ENCODE measurements at regions of chr7 and their contacts with region 1.

Region 1: DNA sequence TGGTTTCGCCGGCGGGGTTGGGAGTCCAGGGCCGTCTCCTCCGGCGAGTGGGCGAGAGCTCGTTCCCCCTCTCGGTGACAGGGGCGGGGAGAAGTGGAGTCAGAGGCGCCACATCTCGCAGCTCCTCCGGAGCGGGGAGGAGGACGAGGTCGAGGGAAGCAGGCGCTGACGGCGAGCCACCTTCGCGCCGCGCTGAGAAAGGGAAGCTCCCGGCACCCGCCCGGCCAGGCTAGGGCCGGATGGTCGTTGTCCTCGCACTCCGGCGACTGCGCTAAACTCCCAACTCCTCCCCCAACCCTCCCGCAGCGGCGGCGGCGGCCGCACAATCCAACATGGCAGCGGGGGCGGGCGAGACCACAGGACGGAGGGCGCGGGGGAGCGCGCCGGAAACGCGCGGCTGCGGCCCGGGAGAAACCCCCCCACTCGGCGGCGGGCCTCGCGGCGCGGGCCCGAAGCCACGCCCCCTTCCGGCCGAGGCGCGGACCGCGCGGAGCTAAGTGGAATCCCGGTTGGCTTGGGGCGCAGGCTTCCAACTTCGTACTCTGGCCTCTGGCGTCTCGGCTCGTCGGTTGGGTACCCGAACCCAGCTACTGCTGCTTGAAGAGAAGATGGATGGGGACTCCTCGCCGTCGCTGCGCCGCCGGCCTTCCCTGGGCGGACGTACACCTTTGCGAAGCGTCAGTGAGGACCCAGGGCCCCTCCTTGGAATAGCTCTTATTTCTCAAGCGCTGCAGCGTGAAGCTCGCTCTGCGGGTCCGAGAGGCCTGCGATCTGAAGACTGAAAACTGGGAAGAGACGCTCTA is at the start of gene WASL:
- DNase-seq: peak; percentile 96 to 99 (median 96)
- ATAC-seq: peak; percentile 75
- H3K4me3 ChIP-seq: peak within 1 kb of the TSS; percentile 77
- H3K27ac ChIP-seq: peak within 1 kb of the TSS; percentile 94
- H3K4me1 ChIP-seq: peaks cover 16 to 20% of the 10 kb centered on the region in 2 experiments; a peak in 4 of 5 replicates
- H3K27me3 ChIP-seq: no peaks in the 10 kb centered on the region
- CTCF ChIP-seq: no peak; a peak in 1 of 6 replicates
- EP300 ChIP-seq: peak; percentile 69; the same call in 1 of the 2 replicates
- POLR2A ChIP-seq: peak; percentile 98
- RAD21 ChIP-seq: peak in 1 of 2 experiments; percentile 25; a peak in 1 of 4 replicates
- polyA plus RNA-seq, gene WASL: 3.2 to 4.4 TPM

Region 2: GRCh38 chr7:123401295-123401694 is 347.6 kb before region 1 on chr7:
- CTCF ChIA-PET with region 1: no interaction called
- POLR2A ChIA-PET with region 1: no interaction called
- in situ Hi-C with region 1: no loop called
- intact Hi-C with region 1: no loop called
- DNase-seq: peak in 1 of 4 experiments; percentile 9
- ATAC-seq: no peak
- H3K4me3 ChIP-seq: no peak overlapping the region
- H3K27ac ChIP-seq: no peak overlapping the region
- H3K4me1 ChIP-seq: no peaks in the 10 kb centered on the region
- H3K27me3 ChIP-seq: no peaks in the 10 kb centered on the region
- CTCF ChIP-seq: no peak
- EP300 ChIP-seq: no peak
- POLR2A ChIP-seq: no peak
- RAD21 ChIP-seq: no peak

Region 3: DNA sequence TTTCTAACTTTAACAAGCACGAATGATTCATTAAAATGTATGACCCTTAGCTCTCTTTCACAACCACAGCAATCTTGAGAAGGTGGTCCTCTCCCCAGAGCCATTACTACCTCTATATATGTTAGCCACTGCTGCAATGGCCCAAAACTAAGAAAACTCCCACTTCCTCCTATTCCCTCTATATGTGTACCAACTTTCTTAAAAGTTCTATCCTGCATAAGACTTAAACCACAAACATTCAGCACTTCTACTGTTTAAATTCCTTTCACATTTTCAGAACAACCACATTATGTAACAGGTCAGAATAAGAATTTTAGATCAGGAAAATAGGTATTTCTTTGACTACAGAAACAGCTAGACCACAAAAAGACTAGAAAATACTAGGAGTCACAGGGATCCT is 36.3 kb before region 1 on chr7:
- CTCF ChIA-PET with region 1: no interaction called
- POLR2A ChIA-PET with region 1: interaction called, 18 read pairs
- in situ Hi-C with region 1: no loop called
- intact Hi-C with region 1: loop called (anchors 1 kb)
- DNase-seq: no peak
- ATAC-seq: peak; percentile 43
- H3K4me3 ChIP-seq: no peak overlapping the region
- H3K27ac ChIP-seq: peak overlapping the region; percentile 13; the same call in 2 of the 3 replicates
- H3K4me1 ChIP-seq: peaks cover 0 to 54% of the 10 kb centered on the region in 2 experiments; a peak in 4 of 5 replicates
- H3K27me3 ChIP-seq: no peaks in the 10 kb centered on the region
- CTCF ChIP-seq: no peak
- EP300 ChIP-seq: no peak
- POLR2A ChIP-seq: no peak
- RAD21 ChIP-seq: no peak

Region 4: DNA sequence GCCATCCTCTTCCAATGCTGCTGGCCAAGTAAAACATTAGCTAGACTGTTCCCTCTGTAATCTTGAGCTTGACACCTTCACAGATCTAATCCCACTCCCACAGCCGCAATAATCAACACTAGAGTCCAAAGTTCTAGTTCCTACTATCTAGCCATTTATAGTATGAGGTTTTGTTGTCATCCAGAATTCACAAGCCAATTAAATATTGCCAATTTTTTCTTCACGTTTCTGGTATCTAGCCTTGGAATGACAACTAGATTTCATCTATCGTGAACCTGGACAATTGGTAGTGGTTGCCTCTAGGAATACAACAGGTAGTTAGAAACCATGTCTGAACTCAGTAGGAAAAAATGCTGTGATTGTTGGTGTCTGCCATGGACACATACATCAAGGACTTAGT is 10.6 kb before region 1 on chr7:
- CTCF ChIA-PET with region 1: no interaction called
- POLR2A ChIA-PET with region 1: interaction called, 28 read pairs
- in situ Hi-C with region 1: no loop called
- intact Hi-C with region 1: no loop called
- DNase-seq: no peak
- ATAC-seq: peak; percentile 13; the same call in 2 of the 3 replicates
- H3K4me3 ChIP-seq: no peak overlapping the region
- H3K27ac ChIP-seq: no peak overlapping the region
- H3K4me1 ChIP-seq: peaks cover 0 to 2% of the 10 kb centered on the region in 2 experiments; a peak in 2 of 5 replicates
- H3K27me3 ChIP-seq: no peaks in the 10 kb centered on the region
- CTCF ChIP-seq: no peak
- EP300 ChIP-seq: no peak
- POLR2A ChIP-seq: no peak
- RAD21 ChIP-seq: no peak

Region 5: DNA sequence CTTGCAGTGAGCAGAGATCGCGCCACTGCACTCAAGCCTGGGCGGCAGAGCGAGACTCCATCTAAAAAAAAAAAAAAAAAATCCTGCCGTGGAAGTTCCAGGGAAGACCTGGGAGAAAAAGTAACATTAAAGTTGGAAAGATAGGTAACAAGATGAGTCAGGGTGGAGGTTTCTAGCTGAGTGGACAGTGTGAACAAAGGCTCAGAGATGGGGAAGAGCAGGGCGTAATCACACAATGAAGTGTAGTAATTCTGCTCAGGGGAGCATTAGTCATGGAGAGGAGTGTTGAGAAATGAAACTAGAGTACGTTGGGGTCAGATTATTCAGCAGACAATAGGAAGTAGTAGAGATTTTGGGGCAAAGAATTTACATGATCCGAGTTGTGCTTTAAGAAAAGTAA is 21.4 kb after region 1 on chr7:
- CTCF ChIA-PET with region 1: no interaction called
- POLR2A ChIA-PET with region 1: interaction called, 7 read pairs
- in situ Hi-C with region 1: no loop called
- intact Hi-C with region 1: loop called (anchors 2 kb)
- DNase-seq: no peak
- ATAC-seq: peak; percentile 65
- H3K4me3 ChIP-seq: no peak overlapping the region
- H3K27ac ChIP-seq: no peak overlapping the region
- H3K4me1 ChIP-seq: 0 out of 5 replicates have a peak, but pooled peaks cover 0 to 4% of the 10 kb centered on the region in 2 experiments
- H3K27me3 ChIP-seq: peaks cover 0 to 2% of the 10 kb centered on the region in 2 experiments; a peak in 1 of 5 replicates
- CTCF ChIP-seq: no peak
- EP300 ChIP-seq: no peak
- POLR2A ChIP-seq: no peak
- RAD21 ChIP-seq: no peak

Measured in K562 (cell line).